BJ (cell line): ENCODE measurements at regions of chr13 and their contacts with region 1.

Region 1: DNA sequence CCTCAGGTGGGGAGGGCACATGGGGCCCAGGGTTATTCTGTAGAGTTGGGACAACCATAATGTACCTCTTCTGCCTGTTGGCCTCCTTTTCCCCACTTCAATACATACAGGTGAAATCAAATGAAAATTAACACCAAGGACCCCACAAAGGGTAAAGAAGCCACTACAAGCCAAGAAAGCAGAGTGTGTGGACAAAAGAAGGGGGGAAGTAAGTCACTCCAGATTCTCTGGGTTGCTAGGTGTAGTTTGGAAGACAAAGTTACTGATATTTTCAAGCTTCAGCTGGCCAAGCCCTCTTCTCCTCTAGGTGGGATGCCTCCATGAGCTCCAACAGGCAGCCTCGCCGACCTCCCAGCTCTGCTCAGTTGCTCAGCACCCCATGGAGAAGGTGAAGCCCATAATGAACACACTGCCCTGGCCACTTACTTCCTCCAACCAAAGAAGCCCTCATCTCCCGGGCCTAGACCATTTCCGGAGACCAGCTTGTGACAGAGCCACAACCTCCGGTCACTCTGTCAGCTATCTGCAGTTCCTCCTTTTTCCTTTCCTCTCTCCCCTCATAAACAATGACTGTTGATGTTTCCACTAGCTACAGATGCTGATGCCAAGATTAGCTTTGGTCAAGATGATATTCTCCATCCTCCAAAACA is 66.8 kb upstream of the MED4 start:
- DNase-seq: no peak
- H3K4me3 ChIP-seq: no peak overlapping the region
- H3K27me3 ChIP-seq: 0 out of 2 replicates have a peak, but pooled peaks cover 2% of the 10 kb centered on the region
- CTCF ChIP-seq: no peak

Region 2: DNA sequence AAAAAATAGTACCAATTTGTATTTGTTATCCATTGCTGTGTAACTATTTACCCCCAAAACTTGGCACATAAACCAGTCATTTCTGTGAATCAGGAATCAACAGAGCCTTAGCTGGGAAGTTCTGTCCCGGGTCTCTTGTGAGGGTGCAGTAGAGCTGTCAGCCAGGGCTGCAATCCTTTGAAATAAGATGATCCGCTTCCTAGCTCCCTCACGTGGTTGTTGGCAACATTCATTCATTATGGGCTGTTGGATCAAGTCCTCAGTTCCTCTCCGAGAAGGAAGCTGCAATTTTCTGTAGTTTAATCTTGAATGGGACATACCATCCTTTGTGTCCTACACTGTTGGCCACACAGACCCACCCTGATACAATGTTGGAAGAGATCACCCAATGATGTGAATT is 437.8 kb before region 1 on chr13:
- CTCF ChIA-PET with region 1: no interaction called
- POLR2A ChIA-PET with region 1: no interaction called
- DNase-seq: no peak
- H3K4me3 ChIP-seq: no peak overlapping the region
- H3K27me3 ChIP-seq: peaks cover 4% of the 10 kb centered on the region; the same call in 1 of the 2 replicates
- CTCF ChIP-seq: no peak

Region 3: DNA sequence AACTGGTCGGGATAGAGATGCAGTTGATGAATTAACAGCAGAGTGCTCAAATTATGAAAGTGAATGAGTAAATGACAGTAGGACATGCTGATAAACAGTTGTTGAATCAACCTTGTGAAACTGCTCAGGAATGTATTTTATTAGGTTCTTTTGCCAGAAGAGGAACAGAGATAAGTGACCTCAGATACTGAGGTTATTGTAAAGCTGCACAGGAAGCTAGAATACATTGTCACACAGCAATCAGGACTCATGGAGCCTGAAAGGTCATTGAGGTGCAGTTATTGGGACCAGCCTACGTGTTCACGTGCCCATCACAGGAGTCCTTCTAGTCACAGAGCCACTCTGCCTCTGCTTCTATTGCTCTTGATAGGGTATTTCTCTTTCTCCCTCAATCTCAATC is 19.2 kb before region 1 on chr13:
- CTCF ChIA-PET with region 1: no interaction called
- POLR2A ChIA-PET with region 1: no interaction called
- DNase-seq: no peak
- H3K4me3 ChIP-seq: no peak overlapping the region
- H3K27me3 ChIP-seq: peaks cover 3% of the 10 kb centered on the region; the same call in 1 of the 2 replicates
- CTCF ChIP-seq: no peak

Region 4: DNA sequence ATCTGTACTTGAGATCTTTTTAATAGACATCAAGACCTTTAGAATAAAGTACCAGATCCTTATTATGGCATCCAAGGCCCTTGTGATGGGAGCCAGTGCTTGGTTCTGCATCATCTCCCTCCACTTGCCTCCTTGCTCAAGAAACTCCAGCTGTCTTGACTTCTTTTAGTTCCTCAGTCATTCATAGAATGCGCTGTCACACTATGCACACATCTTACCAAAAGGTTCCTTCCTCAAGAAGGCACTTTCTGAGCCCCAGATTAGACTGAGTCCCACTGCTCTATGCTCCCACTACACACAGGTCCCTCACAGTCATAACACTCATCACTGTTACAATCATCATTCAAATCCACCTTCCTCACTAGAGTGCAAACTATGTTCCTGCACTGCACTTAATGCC is 13.5 kb after region 1 on chr13:
- CTCF ChIA-PET with region 1: interaction called, 10 read pairs
- POLR2A ChIA-PET with region 1: no interaction called
- DNase-seq: no peak
- H3K4me3 ChIP-seq: no peak overlapping the region
- H3K27me3 ChIP-seq: no peaks in the 10 kb centered on the region; the same call in 1 of the 2 replicates
- CTCF ChIP-seq: no peak